Pancreas (tissue), 10 donors: ENCODE measurements at regions of chr4 and their contacts with region 1.

Region 1: DNA sequence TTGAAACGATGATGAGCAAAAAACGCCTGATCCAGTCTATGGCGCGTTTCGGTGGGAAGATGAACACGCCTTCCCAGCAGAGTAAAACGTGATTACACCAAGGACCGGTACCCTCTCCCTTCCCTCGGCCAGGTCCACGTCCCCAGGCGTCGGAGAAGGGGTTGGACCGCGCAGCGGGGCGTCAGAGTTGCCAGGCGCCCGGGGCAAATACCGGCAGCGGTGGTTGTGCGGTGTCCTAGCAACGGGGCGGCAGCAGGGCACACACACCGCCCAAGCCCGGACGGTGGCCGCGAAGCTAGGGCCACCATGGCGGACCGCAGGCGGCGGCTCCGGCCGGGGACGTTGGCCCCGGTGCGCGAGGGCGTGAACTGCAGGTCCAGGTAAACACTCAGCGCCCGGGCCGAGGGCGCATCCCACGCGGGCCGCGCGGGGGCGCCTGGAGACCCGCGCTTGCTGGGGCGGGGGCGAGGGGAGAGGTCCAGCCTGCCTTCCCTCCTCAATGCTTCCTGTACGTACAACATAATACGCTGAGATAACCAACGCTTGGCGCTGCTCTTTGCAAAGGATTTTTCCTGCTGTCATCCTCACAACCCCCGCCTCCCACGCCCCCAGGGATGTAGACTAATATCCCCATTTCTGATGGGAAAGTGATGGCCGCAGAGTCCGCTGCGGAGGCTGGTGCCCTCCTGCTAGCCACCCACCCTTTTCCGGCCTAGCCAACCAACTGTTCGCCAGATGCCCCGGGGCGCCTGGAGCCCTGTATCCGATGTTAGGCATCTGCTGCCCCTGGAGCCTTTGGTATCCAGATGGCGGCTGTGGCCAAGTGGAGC is at the start of gene FAM47E:
- DNase-seq: peak; percentile 90 to 97 (median 92)
- ATAC-seq: peak; percentile 93 to 98 (median 97)
- H3K4me3 ChIP-seq: peak within 1 kb of the TSS; percentile 41 to 59 (median 55)
- H3K27ac ChIP-seq: peak within 1 kb of the TSS; percentile 79 to 85 (median 81)
- H3K4me1 ChIP-seq: peaks cover 5 to 17% (median 8%) of the 10 kb centered on the region in 3 donors
- H3K27me3 ChIP-seq: no peaks in the 10 kb centered on the region
- CTCF ChIP-seq: peak; percentile 20 to 38 (median 29)
- total RNA-seq, gene FAM47E: 3.6 to 11.5 (median 7.3) TPM

Region 2: GRCh38 chr4:75598390-75598789 is 653.3 kb before region 1 on chr4:
- intact Hi-C with region 1: no loop called
- DNase-seq: no peak
- ATAC-seq: no peak
- H3K4me3 ChIP-seq: no peak overlapping the region
- H3K27ac ChIP-seq: no peak overlapping the region
- H3K4me1 ChIP-seq: peaks cover 0 to 4% (median 0%) of the 10 kb centered on the region in 3 donors
- H3K27me3 ChIP-seq: no peaks in the 10 kb centered on the region
- CTCF ChIP-seq: no peak

Region 3: DNA sequence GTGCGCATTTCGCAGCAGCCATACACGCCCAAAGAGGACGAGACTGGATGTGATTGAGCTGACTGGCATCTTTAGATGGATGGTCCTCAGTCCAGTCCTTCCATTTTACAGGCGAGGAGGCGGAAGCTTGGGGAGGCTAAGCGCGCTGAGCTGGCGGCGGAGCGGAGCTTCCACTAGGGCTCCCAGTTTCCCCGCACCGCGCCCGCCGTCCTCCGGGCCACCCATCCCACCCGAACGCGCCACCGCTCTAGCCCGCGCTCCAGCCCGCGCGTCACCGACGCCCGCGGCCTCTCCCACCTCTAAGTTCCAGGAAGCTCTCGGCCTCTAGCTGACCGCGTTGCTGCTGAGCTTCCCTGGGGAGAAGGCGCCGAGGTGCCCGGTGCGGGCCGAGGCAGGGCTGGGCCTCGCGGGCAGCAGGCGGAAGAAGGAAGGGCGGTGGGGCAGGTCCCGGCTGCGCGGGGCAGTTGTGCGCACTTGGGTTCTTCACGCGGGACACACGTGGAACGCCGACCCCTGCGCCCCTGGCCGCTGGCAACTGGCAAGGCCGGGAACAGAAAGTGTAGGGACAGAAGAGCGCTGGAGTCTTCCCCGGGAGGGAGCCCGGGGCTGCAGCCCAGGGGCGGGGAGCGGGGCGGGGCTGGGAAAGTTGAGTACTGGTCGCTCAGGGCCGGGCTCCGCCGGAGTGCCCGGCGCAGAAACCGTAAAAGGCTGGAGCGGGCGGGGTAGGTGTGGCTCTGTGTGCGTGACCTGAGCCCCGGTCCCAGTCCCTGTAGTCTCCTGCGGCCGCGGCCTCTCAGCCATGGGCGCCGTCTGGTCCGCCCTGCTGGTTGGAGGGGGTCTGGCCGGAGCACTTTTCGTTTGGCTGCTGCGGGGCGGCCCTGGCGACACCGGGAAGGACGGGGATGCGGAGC is 54.6 kb after region 1 on chr4 and contains the start of gene STBD1:
- intact Hi-C with region 1: loop called in 1 of 3 experiments (anchors 10 kb)
- DNase-seq: peak; percentile 80 to 92 (median 86)
- ATAC-seq: peak; percentile 88 to 90 (median 88)
- H3K4me3 ChIP-seq: peak within 1 kb of the TSS; percentile 41 to 92 (median 64)
- H3K27ac ChIP-seq: peak within 1 kb of the TSS; percentile 64 to 97 (median 90)
- H3K4me1 ChIP-seq: peaks cover 11 to 26% (median 13%) of the 10 kb centered on the region in 3 donors
- H3K27me3 ChIP-seq: no peaks in the 10 kb centered on the region
- CTCF ChIP-seq: no peak
- total RNA-seq, gene STBD1: 1.7 to 6.5 (median 2.6) TPM

Region 4: GRCh38 chr4:76326515-76326914 is 74.9 kb after region 1 on chr4:
- intact Hi-C with region 1: no loop called
- DNase-seq: no peak
- ATAC-seq: no peak
- H3K4me3 ChIP-seq: no peak overlapping the region
- H3K27ac ChIP-seq: no peak overlapping the region
- H3K4me1 ChIP-seq: no peaks in the 10 kb centered on the region
- H3K27me3 ChIP-seq: no peaks in the 10 kb centered on the region
- CTCF ChIP-seq: no peak